ENCODE measurements at regions of chr2 and their contacts with region 1.

Region 1: DNA sequence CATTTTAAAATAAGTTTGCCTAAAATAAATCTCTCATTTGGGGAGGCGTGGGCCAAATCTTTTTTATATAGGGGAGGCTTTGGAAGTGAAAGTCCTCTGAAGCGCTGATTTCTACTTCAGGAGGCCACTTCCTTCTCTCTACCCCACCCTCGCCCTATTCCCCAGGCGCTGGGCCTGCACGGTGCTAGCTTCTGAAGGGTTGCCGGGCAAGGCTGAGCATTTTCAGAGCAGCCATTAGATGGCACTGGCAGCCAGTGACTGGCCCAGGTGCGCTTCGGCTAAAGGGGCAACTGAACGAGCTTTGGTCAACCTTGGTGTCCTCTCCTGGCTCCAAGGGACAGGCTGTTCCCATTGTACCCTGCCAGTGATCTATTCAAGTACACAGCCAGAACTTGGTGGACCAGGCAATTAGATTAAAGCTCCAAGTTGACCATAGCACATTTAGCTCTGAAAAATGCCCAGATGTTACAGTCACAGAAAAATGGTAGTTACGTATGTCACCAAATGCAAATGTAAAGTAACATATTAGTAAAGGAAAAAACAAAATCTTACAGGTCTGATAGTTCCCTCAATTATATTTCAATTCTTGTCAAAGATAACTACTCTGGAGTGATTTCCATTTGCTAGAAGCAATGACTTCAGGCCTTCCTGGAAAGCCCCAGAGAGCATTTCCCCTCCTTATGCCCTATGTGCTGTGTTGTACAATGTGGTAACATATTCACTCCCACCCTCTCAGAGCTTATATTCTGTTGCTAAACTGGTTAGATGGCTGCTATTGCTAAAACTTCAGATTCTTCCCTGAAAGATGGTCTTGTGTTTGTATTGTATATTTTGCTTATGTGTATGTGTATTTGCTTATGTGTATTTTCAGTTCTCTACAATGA is 2.1 kb downstream of the POMC start:
- DNase-seq: peak; percentile 48 to 55 (median 49)
- H3K4me3 ChIP-seq: no peak overlapping the region
- H3K27ac ChIP-seq: no peak overlapping the region
- H3K4me1 ChIP-seq: peaks cover 0 to 23% (median 11%) of the 10 kb centered on the region in 4 experiments
- H3K27me3 ChIP-seq: peaks cover 18 to 58% (median 31%) of the 10 kb centered on the region in 5 experiments

Region 2: GRCh38 chr2:25155401-25155800 is 10.8 kb before region 1 on chr2:
- CTCF ChIA-PET with region 1: interaction called, 16 read pairs
- POLR2A ChIA-PET with region 1: no interaction called
- DNase-seq: no peak
- H3K4me3 ChIP-seq: no peak overlapping the region
- H3K27ac ChIP-seq: no peak overlapping the region
- H3K4me1 ChIP-seq: peaks cover 0 to under 1% (median 0%) of the 10 kb centered on the region in 4 experiments
- H3K27me3 ChIP-seq: peaks cover 0 to 4% (median 0%) of the 10 kb centered on the region in 5 experiments

Region 3: DNA sequence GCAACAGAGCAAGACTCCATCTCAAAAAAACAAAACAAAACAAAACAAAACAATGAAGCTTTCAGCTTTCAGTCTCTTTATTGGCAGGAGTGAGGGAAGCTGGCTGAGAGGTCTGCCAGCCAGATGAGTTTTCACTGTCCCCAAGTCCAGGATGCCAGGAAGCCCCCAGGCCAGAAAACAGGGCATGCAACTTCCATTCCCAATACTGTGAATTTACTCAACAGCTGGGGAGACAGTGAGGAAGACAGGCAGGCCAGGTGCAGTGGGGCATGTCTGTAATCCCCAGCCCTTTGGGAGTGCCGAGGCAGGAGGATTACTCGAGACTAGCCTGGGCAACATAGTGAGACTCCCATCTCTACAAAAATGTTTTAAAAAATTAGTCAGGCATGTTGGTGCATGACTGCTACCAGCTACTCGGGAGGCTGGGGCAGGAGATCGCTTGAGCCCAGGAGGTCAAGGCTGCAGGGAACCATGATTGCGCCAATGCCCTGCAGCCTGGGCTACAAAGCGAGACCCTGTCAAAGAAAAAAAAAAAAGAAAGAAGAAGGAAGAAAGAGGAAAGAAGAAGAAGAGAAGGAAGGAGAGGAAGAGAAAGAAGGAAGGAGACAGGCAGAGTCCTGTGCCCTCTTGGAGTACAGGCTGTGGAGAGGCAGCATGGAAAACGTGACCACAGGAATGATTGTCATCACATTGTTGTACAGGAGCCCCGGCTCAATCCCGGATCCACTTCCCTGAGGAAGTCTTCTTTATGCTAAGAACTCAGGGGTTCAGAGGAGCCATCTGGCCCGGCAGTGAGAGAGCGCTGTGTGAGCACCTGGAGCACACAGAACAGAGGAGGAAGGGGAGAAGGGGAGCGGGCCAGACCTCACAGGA is 31.3 kb after region 1 on chr2:
- CTCF ChIA-PET with region 1: interaction called, 44 read pairs
- POLR2A ChIA-PET with region 1: interaction called, 3 read pairs
- DNase-seq: no peak
- H3K4me3 ChIP-seq: no peak overlapping the region
- H3K27ac ChIP-seq: no peak overlapping the region
- H3K4me1 ChIP-seq: peaks cover 0 to 22% (median 17%) of the 10 kb centered on the region in 4 experiments
- H3K27me3 ChIP-seq: no peaks in the 10 kb centered on the region